Posterior vena cava (tissue), 2 donors: ENCODE measurements at regions of chr14 and their contacts with region 1.

Region 1: DNA sequence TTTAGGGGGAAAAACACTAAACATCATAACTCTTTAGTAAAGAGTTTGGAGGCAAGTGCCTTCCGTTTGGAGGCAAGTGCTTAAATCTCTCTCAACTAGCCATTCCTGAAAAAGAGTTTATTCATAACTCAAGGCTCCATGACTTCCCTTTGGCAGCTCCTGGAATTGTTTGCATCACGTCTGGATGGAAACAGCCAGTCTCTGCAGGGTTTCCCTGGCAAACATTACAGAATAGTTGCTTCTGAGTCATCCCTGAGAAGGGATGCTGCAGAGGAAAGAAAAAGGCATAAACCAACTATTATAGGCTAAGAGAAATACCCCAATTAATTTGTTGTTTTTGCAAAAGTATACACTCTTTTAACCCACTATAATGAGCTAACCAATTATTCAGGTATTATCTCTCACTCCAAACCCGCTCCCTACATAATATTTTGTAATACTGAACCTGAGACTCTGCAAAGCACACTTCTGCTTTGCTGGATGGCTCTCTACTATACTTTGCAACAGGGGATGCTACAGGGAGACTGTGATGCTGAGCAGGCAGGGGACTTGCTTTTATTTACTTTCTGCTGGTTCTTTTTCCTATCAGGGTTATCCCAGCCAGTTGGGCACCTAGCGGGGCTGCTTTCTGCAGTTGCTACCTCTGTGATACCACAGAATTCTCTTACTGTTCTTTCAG is 497.7 kb downstream of the FUT8 start:
- DNase-seq: no peak

Region 2: DNA sequence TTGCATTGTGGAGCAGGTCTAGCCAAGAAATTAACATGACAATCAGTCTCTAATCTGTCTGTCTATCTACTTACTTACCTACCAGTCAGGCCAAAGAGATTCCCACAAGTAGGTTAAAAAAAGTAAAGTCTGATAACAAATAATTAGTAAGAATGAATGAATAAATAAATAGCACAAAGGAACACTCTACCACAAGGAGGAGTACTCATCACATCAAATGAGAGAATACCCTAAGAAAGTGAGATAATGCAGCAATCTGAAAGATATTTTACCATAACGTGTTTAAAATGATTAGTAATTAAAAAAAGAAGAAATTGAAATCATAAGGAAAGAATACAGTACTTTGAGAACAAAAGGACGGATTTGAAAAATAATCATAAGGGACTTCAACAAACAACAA is 1870.2 kb before region 1 on chr14:
- intact Hi-C with region 1: loop called in 1 of 2 experiments (anchors 10 kb)
- DNase-seq: no peak

Region 3: DNA sequence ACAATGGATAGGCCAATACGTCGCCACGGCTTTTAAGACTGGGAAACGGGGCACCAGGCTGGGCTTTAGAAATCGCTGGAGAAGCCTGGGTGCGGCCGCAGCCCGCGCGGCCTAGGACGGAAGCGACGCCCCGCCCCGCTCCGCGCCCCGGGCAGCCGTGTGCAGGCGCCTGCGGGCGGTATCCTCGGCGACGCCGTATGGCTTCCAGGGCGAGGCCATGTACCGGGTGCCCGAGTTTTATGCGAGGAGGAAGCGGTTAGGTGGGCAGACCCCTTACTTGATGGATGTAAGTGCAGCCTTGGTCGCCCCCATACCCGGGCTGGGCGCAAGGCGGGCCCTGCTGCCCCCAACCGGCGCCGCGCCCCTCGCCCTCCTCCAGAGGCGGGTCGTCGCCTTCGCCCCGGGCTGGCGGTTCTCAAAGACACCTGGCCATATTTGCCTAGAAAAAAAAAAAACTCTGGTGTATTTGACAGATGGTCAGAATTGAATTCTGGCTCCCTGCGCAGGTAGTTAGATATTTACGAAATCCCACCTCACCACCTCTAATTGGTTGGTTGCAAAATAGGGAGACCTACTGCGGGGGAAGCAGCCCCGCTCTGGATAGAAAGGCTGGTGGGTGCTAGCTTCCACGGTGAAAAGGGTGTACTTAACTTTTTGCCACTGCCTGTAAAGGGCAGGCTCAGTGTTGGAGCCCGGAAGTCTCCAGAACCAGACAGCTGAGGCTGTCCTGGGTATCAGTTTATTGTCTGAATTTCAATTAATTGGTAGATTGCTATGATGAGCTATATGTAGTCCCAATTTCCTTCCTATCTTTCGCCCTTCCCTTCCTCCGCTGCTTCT is 1360.2 kb before region 1 on chr14 and contains the start of gene PPP1R36:
- intact Hi-C with region 1: loop called in 1 of 2 experiments (anchors 5 kb)
- DNase-seq: peak; percentile 82
- total RNA-seq, gene PPP1R36: 0.62 to 0.65 TPM

Region 4: GRCh38 chr14:65346947-65347346 is 563.3 kb before region 1 on chr14:
- intact Hi-C with region 1: no loop called
- DNase-seq: peak; percentile 81

Region 5: DNA sequence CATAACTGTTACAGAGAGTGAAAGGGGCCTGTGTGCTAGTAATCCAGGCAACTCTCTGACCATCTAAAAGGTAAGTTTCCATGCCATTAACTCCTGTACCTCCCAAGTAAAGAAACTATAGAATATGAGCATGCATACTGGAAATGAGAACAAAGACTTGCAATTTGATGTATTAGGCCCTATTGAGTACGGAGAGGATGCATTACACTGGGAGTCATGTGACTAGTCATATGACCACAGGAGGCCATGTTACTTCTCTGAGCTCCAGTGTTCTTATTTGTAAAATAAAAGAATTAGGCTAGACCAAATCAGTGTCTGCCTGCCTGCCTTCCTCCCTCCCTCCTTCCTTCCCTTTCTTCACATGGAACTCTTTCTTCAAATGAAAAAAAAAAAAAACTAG is 135.8 kb after region 1 on chr14:
- intact Hi-C with region 1: no loop called
- DNase-seq: no peak